ENCODE measurements at regions of chrX and their contacts with region 1.

Region 1: GRCh38 chrX:151082076-151082948 is 94.1 kb upstream of the GPR50 start:
- DNase-seq: peak; percentile 51 to 56
- ATAC-seq: peak; percentile 91 to 96
- H3K4me3 ChIP-seq: peak overlapping the region; percentile 31; the same call in 2 of the 3 replicates
- H3K27ac ChIP-seq: peak overlapping the region; percentile 69 to 84; a peak in 5 of 6 replicates
- H3K4me1 ChIP-seq: 0 out of 3 replicates have a peak, but pooled peaks cover 4% of the 10 kb centered on the region
- CTCF ChIP-seq: peak; percentile 73
- EP300 ChIP-seq: no peak
- POLR2A ChIP-seq: no peak
- RAD21 ChIP-seq: peak; percentile 80 to 90

Region 2: DNA sequence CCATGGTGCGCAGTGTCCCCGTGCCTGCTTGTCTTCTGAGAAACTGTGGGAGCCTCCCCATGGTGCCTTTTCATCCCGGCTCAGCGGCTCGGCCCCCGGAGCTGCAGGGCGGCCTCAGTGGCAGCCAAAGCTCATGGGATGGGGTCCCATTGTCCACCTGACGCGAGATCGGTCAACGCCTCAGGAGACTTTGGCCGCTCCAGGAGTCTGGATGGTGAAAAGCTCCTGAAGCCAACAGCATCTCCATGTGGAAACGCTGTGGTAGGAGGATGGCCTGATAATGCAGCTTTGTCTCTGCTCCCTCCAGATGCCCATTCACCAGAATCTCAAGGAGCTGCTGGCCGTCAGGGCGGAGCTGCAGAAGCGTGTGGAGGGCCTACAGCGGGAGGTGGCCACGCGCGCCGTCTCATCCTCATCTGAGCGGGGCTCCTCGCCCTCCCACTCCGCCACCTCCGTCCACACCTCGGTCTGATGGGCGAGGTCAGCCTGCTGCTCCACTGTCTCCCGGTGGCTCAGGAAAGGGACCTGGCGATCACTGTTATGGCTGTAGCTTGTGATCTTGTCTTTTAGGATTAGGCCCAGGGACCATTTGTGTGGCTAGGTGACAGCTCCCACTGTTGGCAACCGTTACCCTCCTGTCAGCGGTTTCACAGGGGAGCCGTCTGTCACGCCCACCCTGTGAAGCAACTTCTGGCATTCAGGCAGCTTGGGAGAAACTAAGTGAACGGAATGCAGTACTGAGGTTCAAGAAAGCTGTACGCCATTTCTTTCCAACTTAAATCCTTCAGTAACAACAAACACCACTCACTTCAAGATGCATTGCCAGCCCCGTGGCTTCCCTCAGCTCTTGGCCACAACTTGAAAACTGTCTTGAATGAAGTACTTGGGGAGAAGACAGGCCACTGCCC is 319.8 kb before region 1 on chrX:
- CTCF ChIA-PET with region 1: interaction called, 223 read pairs
- POLR2A ChIA-PET with region 1: no interaction called
- DNase-seq: no peak
- ATAC-seq: no peak; a peak in 1 of 6 replicates
- H3K4me3 ChIP-seq: no peak overlapping the region
- H3K27ac ChIP-seq: no peak overlapping the region
- H3K4me1 ChIP-seq: peaks cover 3% of the 10 kb centered on the region; the same call in 1 of the 3 replicates
- CTCF ChIP-seq: no peak
- EP300 ChIP-seq: no peak
- POLR2A ChIP-seq: no peak
- RAD21 ChIP-seq: no peak

Region 3: GRCh38 chrX:150779385-150779784 is 302.9 kb before region 1 on chrX:
- CTCF ChIA-PET with region 1: interaction called, 223 read pairs
- POLR2A ChIA-PET with region 1: no interaction called
- DNase-seq: no peak
- ATAC-seq: no peak
- H3K4me3 ChIP-seq: no peak overlapping the region
- H3K27ac ChIP-seq: no peak overlapping the region
- H3K4me1 ChIP-seq: no peaks in the 10 kb centered on the region
- CTCF ChIP-seq: no peak
- EP300 ChIP-seq: no peak
- POLR2A ChIP-seq: no peak
- RAD21 ChIP-seq: no peak

Region 4: DNA sequence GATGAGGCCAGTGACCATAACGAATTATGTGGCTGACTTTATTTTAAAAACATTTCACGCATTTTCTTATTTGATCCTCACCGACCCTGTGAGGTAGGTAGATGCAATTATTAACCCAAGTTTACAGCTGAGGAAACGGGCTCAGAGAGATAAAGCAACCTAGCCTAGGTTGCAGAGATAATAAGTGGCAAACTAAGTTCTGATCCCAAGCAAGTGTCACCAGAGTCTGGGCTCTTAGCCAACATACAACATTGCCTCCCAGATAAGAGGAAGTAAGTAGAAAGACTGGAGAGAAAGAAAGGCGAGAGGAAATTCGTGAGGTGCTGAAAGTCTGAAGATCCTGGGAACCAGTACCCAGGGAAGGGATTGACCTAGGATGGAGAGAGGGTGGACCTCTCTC is 16.7 kb after region 1 on chrX:
- CTCF ChIA-PET with region 1: interaction called, 10 read pairs
- POLR2A ChIA-PET with region 1: no interaction called
- DNase-seq: no peak
- ATAC-seq: no peak
- H3K4me3 ChIP-seq: no peak overlapping the region
- H3K27ac ChIP-seq: no peak overlapping the region
- H3K4me1 ChIP-seq: no peaks in the 10 kb centered on the region
- CTCF ChIP-seq: no peak
- EP300 ChIP-seq: no peak
- POLR2A ChIP-seq: no peak
- RAD21 ChIP-seq: no peak